Activated B cell treated with CpG ODN at 0.5 μM for 24 hours (primary cell): ENCODE measurements at regions of chr15 and their contacts with region 1.

Region 1: GRCh38 chr15:72272213-72273002 is at the start of gene PARP6:
- DNase-seq: peak; percentile 95
- ATAC-seq: peak; percentile 96
- H3K4me3 Mint-ChIP-seq: peak within 1 kb of the TSS; percentile 87
- H3K27ac Mint-ChIP-seq: peak within 1 kb of the TSS; percentile 86
- H3K4me1 Mint-ChIP-seq: peaks cover 36% of the 10 kb centered on the region
- H3K27me3 Mint-ChIP-seq: no peaks in the 10 kb centered on the region
- CTCF ChIP-seq: no peak
- total RNA-seq, gene PARP6: 70.7 and 81.4 TPM in 2 replicates

Region 2: DNA sequence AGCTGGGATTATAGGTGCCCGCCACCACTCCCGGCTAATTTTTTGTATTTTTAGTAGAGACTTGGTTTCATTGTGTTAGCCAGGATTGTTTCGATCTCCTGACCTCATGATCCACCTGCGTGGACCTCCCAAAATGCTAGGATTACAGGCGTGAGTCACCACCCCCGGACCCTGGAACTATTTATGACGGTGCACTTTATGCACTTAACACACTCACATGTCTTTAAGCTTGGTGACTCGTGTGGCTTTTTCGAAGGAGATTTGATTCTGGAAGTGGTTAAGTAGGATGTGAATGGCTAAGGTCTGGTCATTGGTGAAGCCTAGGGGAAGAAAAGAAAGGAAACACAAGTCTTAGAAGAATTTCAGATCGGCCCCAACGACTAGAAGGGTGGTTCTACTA is 433.9 kb after region 1 on chr15:
- CTCF ChIA-PET with region 1: no interaction called
- POLR2A ChIA-PET with region 1: interaction called, 10 read pairs
- intact Hi-C with region 1: no loop called
- DNase-seq: no peak
- ATAC-seq: no peak
- H3K4me3 Mint-ChIP-seq: no peak overlapping the region
- H3K27ac Mint-ChIP-seq: no peak overlapping the region
- H3K4me1 Mint-ChIP-seq: peaks cover 2% of the 10 kb centered on the region
- H3K27me3 Mint-ChIP-seq: no peaks in the 10 kb centered on the region
- CTCF ChIP-seq: no peak